ENCODE measurements at regions of chr5 and their contacts with region 1.

Region 1: DNA sequence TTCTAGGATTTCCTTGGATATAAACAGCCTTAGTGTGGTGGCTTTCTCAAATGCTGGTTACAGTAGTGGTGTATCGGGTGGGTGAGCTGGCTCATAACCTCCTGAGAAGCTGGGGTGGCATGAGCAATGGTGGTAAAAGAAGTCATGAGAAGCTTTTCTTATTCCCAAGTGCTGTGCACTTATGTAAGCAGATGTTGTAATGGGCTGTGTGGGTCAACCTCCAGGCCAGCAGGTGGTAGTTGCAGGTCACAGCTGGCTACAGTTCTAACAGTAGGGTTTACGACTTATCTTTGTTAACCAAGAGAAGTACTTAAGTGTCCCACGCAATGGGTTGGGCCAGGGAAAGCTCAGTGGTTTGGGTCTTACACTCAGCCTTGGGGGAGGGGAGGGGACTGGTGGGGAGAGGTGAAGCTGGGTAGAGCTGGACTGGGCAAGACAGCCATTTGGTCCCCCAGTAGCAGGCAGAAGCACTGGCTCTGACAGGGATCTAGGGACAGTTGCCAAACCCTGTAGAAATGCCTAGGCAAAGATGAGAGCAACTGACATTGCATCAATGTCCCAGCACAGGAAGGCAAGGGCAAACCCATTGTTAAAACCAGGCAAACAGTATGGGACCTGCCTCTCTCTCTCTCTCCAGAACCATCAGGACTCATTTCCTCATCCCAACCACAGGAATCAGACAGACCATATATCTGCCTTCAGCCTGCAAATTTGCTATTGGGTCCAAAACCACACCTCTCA is 76.8 kb downstream of the RNF130 start:
- DNase-seq: no peak
- ATAC-seq: no peak
- H3K4me3 ChIP-seq: no peak overlapping the region
- H3K27ac ChIP-seq: no peak overlapping the region
- H3K4me1 ChIP-seq: no peaks in the 10 kb centered on the region
- H3K27me3 ChIP-seq: no peaks in the 10 kb centered on the region
- CTCF ChIP-seq: no peak

Region 2: GRCh38 chr5:180007582-180007981 is 12.8 kb after region 1 on chr5:
- CTCF ChIA-PET with region 1: no interaction called
- POLR2A ChIA-PET with region 1: interaction called, 17 read pairs
- intact Hi-C with region 1: no loop called
- DNase-seq: no peak
- ATAC-seq: no peak
- H3K4me3 ChIP-seq: no peak overlapping the region
- H3K27ac ChIP-seq: no peak overlapping the region
- H3K4me1 ChIP-seq: no peaks in the 10 kb centered on the region
- H3K27me3 ChIP-seq: no peaks in the 10 kb centered on the region
- CTCF ChIP-seq: no peak

Measured in PC-3 (cell line).